Activated CD4-positive, alpha-beta memory T cell treated with anti-CD3 and anti-CD28 coated beads, Interleukin-2, amount 10 ng/mL, durations not matched to agents 7 days and 5 days (primary cell): ENCODE measurements at regions of chr11 and their contacts with region 1.

Region 1: DNA sequence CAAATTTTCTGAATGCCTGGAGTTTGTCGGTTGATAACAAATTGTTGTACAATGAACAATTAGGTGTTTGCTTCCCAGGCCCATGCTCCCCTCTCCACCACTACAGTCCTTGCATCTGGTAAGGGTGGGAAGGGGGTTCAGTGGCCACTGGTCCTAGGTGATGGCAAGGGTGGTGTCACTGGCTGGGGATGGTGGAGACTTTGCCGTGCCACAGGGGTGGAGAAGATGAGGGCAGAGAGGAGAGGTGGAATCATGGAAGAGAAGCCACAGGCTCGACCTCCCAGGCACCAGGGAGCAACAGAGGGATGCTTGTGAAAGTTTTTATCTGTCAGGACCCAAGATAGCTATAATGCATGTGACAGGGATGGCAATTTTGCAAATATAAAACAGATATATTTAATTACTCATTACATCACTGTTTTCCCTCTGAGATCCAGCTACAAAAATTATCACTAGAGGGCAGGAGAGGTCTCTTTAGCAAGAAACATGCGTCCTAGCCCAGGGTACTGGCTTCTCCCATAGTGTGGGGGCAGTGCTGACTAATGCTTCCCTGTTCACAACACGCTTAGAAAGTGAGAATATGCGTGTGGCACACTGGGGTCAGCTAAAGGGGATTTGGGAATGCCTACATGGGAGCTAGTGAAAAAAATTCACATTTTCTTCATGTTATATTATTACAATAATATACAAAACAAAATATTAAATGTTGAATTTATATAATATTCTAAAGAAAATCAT is 49.0 kb upstream of the AMPD3 start:
- DNase-seq: peak; percentile 45
- H3K4me3 Mint-ChIP-seq: no peak overlapping the region
- H3K27ac Mint-ChIP-seq: no peak overlapping the region
- H3K4me1 Mint-ChIP-seq: peaks cover 41% of the 10 kb centered on the region
- H3K27me3 Mint-ChIP-seq: no peaks in the 10 kb centered on the region

Region 2: DNA sequence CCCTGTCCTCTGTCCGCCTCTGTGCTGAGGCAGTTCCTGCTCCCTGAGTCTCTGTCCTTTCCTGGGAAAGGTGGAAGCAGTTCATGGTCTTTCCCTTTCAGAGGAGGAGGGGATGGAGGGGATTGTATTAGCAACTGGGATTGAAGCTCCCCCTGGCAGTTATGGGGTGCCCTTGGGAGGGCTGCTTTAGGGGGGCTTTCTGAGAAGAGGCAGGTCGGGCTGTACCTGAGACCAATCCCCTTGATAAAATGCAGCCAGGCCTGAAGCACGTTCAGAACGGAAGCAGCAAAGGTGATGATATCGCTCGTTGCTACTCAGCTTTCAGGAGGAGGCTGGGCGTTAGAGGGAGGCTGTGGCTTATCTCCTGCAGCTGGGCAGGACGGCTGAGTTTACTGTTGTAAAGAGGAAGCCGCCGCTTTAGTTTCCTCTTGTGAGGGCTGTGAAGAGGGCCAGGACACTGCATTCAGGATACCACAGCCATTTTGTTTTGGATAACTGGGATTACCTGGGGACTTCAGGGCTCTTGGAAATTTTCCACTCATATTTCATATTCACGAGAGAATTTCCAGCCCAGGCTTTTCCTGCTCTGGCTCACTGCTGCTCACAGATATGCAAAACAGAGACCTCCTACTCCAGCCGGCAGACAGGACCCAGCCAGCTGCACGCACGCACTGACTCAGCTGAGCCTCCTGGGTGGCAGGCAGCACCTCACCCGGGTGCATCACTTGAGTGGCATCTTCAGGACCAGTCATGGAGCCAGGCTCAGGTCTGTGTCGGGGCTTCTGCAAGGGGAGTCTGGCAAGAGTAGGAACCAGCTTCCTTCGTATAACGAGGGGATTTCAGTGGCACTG is 49.8 kb after region 1 on chr11:
- CTCF ChIA-PET with region 1: interaction called, 11 read pairs
- POLR2A ChIA-PET with region 1: interaction called, 8 read pairs
- DNase-seq: peak; percentile 85
- H3K4me3 Mint-ChIP-seq: peak overlapping the region; percentile 84
- H3K27ac Mint-ChIP-seq: peak overlapping the region; percentile 90
- H3K4me1 Mint-ChIP-seq: peaks cover 78% of the 10 kb centered on the region
- H3K27me3 Mint-ChIP-seq: no peaks in the 10 kb centered on the region

Region 3: DNA sequence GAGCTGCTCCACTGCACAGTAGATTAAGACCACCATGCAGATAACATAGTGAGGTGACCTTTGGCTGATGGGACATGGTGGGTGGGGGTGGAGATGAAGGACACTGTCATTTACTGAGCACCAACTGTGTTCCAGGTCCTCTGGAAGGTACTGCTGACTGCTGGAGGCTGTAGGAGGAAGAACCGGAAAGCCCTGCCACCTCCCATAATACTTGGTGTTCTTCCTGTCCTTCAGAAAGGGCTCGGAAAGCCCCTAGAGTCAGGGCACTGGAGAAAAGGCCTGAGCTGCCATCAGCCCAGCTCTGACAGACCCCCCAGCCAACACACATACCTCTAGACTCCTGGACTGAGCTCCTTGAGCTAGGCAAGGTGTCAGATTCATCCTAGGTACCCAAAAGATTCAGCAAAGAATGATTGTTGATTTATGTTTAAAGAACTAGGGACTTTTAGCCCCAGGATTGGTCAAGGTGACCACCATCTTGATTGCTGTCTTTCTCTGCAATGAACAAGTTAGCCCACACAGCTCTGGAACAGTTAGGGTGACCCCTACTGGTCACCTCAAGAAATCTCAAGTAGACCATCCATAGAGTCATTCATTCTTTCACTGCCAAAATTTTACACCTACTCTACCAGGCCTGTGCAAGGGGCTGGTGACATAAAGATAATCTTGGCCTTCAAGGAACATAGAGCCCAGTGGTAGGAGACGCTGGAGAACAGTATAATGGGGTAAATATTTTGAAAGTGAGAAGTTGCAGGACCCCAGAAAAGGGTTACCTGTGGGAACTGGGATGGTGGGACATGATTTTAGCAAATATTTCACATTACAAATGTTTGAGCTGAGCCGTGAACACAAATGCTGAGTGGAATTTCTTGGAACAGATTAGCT is 248.1 kb after region 1 on chr11:
- CTCF ChIA-PET with region 1: interaction called, 135 read pairs
- POLR2A ChIA-PET with region 1: interaction called, 4 read pairs
- DNase-seq: peak; percentile 49
- H3K4me3 Mint-ChIP-seq: no peak overlapping the region
- H3K27ac Mint-ChIP-seq: no peak overlapping the region
- H3K4me1 Mint-ChIP-seq: peaks cover 39% of the 10 kb centered on the region
- H3K27me3 Mint-ChIP-seq: no peaks in the 10 kb centered on the region

Region 4: DNA sequence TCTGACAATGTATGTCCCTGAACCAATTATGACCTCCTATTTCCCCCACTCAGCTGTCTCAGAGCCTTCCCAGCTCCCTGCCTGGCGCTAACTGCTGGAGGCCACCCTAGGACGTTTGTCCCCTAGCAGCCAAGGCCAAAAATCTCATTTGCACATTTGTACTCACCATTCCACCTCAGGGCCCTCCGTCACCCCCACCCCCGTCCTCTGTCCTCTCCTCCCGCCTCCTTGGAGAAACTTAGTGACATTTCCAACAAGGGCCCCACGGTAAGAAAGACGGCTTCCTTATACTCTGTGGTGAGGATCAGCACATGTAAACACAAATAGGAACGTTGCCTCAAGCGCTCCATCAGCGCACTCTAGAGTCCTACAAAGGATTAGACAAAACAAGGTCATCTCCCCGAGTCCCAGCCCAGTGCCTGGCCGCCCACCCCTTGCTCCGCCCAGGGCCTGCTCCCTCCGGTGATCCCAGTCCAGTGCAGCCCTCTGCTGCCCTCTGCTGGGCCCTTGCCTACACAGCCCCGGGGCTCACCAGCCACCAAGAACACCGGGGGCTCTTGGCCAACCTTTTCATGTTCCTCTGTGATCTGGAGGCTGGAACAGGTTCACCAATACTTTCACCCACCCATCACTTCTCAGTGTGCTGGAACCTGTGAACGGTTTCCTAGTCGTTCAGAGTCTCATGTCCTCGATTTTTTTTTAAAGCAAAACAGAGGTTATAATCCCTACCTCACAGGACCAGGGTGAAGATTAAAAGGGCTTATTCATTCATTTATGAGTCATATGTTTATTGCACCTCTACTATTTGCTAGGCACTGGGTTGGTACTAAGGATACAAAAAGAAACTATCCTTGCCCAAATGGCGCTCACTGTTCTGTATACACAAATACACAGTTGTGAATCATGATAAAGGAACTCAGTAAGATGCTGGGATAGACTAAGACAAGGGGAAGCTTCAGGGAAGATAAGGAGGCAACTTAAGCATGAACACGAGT is 329.8 kb after region 1 on chr11:
- CTCF ChIA-PET with region 1: interaction called, 17 read pairs
- POLR2A ChIA-PET with region 1: no interaction called
- DNase-seq: peak; percentile 88
- H3K4me3 Mint-ChIP-seq: peak overlapping the region; percentile 46
- H3K27ac Mint-ChIP-seq: no peak overlapping the region
- H3K4me1 Mint-ChIP-seq: peaks cover 10% of the 10 kb centered on the region
- H3K27me3 Mint-ChIP-seq: peaks cover 5% of the 10 kb centered on the region